Spleen (tissue), 13 donors: ENCODE measurements at regions of chr2 and their contacts with region 1.

Region 1: DNA sequence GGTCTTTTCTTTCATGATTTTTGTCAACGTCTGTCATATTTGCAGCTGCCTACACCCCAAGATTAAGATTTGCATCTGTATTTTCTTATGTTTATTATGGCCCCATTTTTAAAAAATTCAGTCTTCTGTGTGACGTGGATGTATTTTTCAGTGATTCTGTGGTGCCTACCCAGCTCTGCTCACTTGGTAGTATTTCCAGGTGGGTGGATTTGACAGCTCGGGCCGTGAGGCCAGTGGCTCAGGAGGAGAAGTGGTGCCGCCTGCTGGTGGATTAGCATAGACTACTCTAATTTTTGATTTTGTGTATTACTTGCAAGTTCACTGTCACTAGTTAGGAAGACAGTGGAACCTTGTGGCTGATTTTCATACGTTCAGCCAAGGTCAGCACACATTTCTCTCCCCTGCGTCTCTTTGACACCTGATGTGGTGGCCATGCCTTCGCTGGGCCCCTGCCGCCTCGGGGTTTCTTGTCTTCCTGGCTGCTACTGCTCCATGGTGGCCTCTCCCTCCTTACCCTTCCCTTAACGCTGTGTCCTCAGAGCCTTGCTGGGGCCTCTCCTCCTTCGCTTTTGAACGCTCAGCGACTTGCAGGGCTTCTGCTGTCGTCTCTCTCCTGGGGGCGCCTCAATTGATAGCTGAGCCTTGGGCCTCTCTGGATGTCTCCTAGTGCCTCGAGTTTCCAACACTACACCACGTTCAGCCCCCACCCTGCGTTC is 89.3 kb downstream of the DGKD start:
- DNase-seq: peak; percentile 92
- H3K4me3 ChIP-seq: no peak overlapping the region
- H3K27ac ChIP-seq: peak overlapping the region in 1 of 8 donors; percentile 14
- H3K4me1 ChIP-seq: peaks cover 0 to 27% (median 7%) of the 10 kb centered on the region in 6 donors
- H3K27me3 ChIP-seq: no peaks in the 10 kb centered on the region
- CTCF ChIP-seq: peak; percentile 33 to 83 (median 70)
- POLR2A ChIP-seq: no peak

Region 2: GRCh38 chr2:233037078-233037477 is 406.5 kb before region 1 on chr2:
- intact Hi-C with region 1: no loop called
- DNase-seq: no peak
- H3K4me3 ChIP-seq: no peak overlapping the region
- H3K27ac ChIP-seq: no peak overlapping the region
- H3K4me1 ChIP-seq: no peaks in the 10 kb centered on the region
- H3K27me3 ChIP-seq: no peaks in the 10 kb centered on the region
- CTCF ChIP-seq: no peak
- POLR2A ChIP-seq: no peak

Region 3: DNA sequence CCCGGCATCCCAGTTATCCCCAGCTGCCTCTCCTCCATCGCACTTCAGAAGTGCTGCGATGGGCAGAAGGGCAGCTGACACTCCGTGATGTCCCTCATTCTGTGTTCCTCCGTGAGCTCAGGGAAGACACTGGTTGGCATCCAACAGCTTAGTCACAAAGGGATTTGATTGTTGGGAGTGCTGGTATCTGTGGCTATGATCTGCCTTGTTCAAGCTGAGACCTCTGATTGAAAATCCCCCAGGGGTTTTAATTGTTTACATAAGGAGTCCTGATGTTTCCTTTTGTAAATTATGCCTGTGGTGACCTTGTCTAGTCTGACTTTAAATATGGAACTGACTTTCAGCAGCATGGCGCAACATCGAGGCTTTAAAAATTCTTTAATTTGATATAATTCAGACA is 154.9 kb before region 1 on chr2:
- intact Hi-C with region 1: loop called (anchors 10 kb)
- DNase-seq: no peak
- H3K4me3 ChIP-seq: no peak overlapping the region
- H3K27ac ChIP-seq: no peak overlapping the region
- H3K4me1 ChIP-seq: no peaks in the 10 kb centered on the region
- H3K27me3 ChIP-seq: no peaks in the 10 kb centered on the region
- CTCF ChIP-seq: no peak
- POLR2A ChIP-seq: no peak

Region 4: GRCh38 chr2:233409286-233409991 is 34.2 kb before region 1 on chr2:
- intact Hi-C with region 1: loop called (anchors 5 kb)
- DNase-seq: no peak
- H3K4me3 ChIP-seq: no peak overlapping the region
- H3K27ac ChIP-seq: peak overlapping the region in 7 of 8 donors; percentile 10 to 64 (median 53)
- H3K4me1 ChIP-seq: peaks cover 12 to 59% (median 48%) of the 10 kb centered on the region in 6 donors
- H3K27me3 ChIP-seq: no peaks in the 10 kb centered on the region
- CTCF ChIP-seq: no peak
- POLR2A ChIP-seq: no peak

Region 5: DNA sequence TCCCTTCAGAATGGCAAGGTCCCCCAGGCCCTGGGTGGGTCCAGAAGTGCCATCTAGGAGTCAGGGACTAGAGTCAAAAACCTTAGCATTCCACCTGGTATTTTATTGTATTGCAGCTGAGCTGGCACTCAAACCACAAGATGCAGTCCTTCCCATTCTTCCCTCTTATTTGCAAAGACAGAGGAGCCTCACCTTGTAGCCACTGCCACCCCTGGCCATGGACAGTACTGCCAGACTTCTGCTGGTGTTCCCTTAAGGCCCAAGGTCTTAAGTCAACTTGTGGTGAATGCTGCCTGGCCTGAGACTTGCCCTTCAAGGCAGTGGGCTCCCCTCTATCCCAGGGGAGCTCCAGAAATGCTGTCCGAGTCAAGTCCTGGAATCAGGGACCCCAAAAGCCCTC is 199.5 kb after region 1 on chr2:
- intact Hi-C with region 1: no loop called
- DNase-seq: no peak
- H3K4me3 ChIP-seq: no peak overlapping the region
- H3K27ac ChIP-seq: no peak overlapping the region
- H3K4me1 ChIP-seq: no peaks in the 10 kb centered on the region
- H3K27me3 ChIP-seq: no peaks in the 10 kb centered on the region
- CTCF ChIP-seq: no peak
- POLR2A ChIP-seq: no peak